ENCODE measurements at regions of chr22 and their contacts with region 1.

Region 1: DNA sequence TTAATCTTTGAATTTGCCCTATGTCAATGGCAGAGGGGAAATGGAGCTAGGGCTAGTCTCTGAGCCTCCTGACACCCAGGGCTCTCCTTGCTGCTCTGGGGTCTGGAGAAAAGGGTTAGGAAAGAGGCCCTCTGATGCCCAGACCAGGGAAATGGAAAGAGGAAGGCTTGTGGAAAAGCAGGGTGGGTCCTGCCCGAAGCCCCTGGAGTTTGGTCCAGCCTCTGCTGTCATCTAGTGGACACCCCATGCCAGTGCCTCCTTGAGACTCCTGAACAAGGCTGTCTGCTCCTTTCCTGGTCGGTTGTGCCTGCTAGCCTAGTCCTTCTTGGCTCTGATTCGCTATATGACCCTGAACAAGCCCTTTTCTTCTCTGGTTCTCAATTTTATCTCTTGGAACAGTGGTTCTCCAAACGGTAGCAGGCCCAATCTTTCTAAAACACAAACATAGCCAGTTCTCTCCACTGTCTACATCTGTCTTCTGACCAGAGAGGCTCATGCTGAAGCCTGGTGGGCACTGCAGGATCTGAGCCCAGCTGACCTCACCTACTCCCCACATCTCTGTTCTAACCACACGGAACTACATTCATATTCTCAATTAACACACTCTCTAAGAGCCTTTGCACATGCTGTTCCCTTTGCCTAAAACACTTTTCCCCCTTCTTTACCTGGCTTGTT is 8.8 kb upstream of the PLA2G3 start:
- DNase-seq: no peak
- ATAC-seq: peak; percentile 77
- H3K4me3 Mint-ChIP-seq: no peak overlapping the region
- H3K27ac Mint-ChIP-seq: no peak overlapping the region
- H3K4me1 Mint-ChIP-seq: peaks cover 1% of the 10 kb centered on the region
- H3K27me3 Mint-ChIP-seq: peaks cover 2% of the 10 kb centered on the region
- CTCF ChIP-seq: no peak

Region 2: GRCh38 chr22:30763815-30764686 is 385.0 kb before region 1 on chr22:
- CTCF ChIA-PET with region 1: no interaction called
- POLR2A ChIA-PET with region 1: no interaction called
- intact Hi-C with region 1: loop called (anchors 2 kb)
- DNase-seq: no peak
- ATAC-seq: no peak
- H3K4me3 Mint-ChIP-seq: no peak overlapping the region
- H3K27ac Mint-ChIP-seq: no peak overlapping the region
- H3K4me1 Mint-ChIP-seq: no peaks in the 10 kb centered on the region
- H3K27me3 Mint-ChIP-seq: peaks cover 3% of the 10 kb centered on the region
- CTCF ChIP-seq: no peak

Region 3: GRCh38 chr22:30947816-30948454 is 201.2 kb before region 1 on chr22:
- CTCF ChIA-PET with region 1: no interaction called
- POLR2A ChIA-PET with region 1: no interaction called
- intact Hi-C with region 1: loop called (anchors 1 kb)
- DNase-seq: no peak
- ATAC-seq: no peak
- H3K4me3 Mint-ChIP-seq: no peak overlapping the region
- H3K27ac Mint-ChIP-seq: no peak overlapping the region
- H3K4me1 Mint-ChIP-seq: no peaks in the 10 kb centered on the region
- H3K27me3 Mint-ChIP-seq: no peaks in the 10 kb centered on the region
- CTCF ChIP-seq: no peak

Region 4: DNA sequence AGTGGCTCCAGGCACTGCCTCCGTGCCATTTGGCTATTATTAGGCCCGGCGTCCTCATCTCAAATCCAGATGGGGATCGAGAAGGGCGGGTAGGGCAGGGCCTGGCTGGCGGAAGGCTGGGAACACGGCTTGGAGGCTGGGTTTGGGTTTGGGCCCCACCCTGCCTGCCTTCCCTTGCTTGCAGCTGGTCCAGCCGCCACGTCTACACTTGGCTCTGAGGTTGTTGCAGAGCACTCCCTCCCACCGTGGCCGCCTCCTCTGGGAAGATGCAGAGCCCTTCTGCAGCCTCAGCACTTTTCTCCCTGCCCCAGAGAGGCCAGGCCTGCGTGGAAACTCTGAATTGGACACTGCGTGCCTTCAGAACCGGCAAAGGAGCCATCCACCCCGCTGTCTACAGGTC is 73.1 kb before region 1 on chr22:
- CTCF ChIA-PET with region 1: no interaction called
- POLR2A ChIA-PET with region 1: no interaction called
- intact Hi-C with region 1: no loop called
- DNase-seq: no peak
- ATAC-seq: no peak
- H3K4me3 Mint-ChIP-seq: no peak overlapping the region
- H3K27ac Mint-ChIP-seq: no peak overlapping the region
- H3K4me1 Mint-ChIP-seq: peaks cover 4% of the 10 kb centered on the region
- H3K27me3 Mint-ChIP-seq: no peaks in the 10 kb centered on the region
- CTCF ChIP-seq: no peak

Region 5: GRCh38 chr22:31089160-31090100 is 59.7 kb before region 1 on chr22:
- CTCF ChIA-PET with region 1: interaction called, 3 read pairs
- POLR2A ChIA-PET with region 1: no interaction called
- intact Hi-C with region 1: loop called (anchors 1 kb)
- DNase-seq: peak; percentile 36
- ATAC-seq: peak; percentile 14
- H3K4me3 Mint-ChIP-seq: no peak overlapping the region
- H3K27ac Mint-ChIP-seq: peak overlapping the region; percentile 54
- H3K4me1 Mint-ChIP-seq: peaks cover 27% of the 10 kb centered on the region
- H3K27me3 Mint-ChIP-seq: no peaks in the 10 kb centered on the region
- CTCF ChIP-seq: no peak